ENCODE measurements at regions of chr2 and their contacts with region 1.

Region 1: DNA sequence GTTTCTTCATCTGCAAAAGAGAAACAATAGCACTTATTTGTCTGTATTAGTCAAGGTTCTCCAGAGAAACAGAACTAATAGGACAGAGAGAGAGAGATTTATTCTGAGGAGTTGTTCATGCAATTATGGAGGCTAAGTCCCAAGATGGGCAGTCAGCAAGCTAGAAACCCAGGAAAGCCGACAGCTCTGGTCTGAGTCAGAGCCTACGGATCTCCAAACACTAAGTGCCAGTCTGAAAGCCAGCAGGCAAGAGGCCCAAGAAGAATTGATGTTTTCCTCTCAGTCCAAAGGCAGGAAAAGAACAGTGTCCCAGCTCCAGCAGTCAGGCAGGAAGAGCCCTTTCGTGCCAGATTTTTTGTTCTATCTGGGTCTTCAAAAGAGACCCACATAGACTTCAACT is 36.5 kb upstream of the SLC66A3 start:
- DNase-seq: no peak
- ATAC-seq: no peak

Region 2: DNA sequence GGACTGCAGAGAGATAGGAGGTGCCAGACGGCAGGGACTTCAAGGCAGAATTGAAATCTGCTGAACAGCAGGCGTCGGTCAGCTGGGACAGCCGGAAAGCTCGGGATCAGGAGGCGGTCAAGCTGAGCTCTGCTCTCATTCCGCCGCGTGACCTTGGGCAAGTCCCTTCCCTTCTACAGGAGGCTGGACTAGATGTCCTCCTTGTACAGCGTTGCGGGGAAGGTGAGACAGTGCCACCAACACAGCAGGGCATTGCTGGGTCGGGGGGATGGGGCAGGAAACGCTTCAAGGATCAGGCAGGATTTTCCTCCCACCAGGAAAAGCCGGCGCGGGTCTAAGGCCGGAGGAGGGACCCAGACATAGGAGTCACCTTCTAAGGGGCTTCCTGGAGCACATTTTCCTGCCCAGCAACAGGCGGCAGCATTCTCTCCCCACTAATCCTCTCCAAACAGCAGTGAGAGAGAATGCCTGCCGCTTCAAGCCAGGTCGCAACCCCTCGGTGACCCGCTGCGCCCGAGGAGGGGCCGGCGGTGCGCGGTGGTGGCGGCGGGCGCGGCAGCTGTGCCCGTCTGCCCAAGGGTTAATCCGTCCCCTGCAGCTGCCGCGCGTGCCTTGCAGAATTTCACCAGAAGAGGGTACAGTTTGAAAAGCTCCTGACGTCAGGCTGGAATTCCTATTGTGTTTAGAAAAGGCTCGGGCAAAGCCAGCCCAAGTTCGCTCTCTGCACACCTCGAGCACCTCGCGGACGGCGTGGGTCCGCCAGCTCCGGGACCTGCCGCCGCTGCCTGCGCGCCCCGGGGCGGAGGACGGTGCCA is 207.3 kb before region 1 on chr2 and contains the start of gene KCNF1:
- intact Hi-C with region 1: loop called (anchors 10 kb)
- DNase-seq: no peak
- ATAC-seq: peak; percentile 2 to 6
- total RNA-seq, gene KCNF1: 0.24 to 0.97 TPM

Region 3: GRCh38 chr2:10935953-10936942 is 182.5 kb before region 1 on chr2:
- intact Hi-C with region 1: no loop called
- DNase-seq: no peak
- ATAC-seq: peak in 1 of 2 donors; percentile 76